ENCODE measurements at regions of chr12 and their contacts with region 1.

Region 1: DNA sequence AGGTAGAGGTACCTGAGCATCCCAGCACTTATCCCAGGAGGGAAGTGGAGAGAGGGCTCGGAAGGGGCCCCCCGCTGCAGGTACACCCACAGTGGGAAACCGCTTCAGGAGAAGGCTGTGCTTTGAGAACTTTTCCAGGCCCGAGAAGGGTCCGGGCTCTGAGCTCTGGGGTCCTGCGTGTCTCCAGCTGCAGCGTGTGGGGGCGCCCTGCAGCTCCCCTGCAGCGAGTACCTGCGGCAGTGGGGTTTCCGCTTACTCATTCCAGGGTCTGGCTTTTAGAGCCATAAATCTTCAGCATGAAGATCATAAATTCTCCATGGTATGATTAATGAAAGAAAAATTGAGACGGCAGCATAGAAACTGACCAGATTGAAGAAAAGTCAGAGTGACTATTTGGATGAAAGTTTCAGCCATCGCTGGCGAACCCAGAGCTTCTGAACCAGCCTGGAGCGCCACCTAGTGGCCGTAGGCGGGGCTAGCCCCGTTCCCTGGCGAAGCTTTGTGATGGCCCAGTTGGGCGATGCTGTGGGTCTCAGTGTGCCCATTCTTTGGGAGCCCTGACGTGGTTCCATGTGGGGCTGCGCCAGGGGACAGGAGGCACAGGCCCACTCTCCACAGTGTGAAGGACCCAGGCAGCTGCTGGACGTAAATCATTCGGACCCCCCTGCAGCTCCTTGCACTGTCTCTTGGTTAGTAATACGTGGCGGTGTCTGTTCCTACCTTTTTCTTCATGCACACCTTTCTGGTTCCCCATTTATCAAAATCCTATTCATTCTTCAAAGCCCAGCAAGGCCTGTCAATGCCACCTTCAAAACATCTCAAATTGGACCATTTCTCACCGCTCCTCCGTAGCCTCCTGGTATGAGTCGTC is 198.2 kb downstream of the TSPAN9 start:
- DNase-seq: peak; percentile 68
- H3K4me3 ChIP-seq: no peak overlapping the region
- CTCF ChIP-seq: peak; percentile 97

Region 2: GRCh38 chr12:3073438-3074250 is 201.8 kb before region 1 on chr12:
- in situ Hi-C with region 1: loop called (anchors 10 kb)
- DNase-seq: peak; percentile 88
- H3K4me3 ChIP-seq: no peak overlapping the region
- CTCF ChIP-seq: peak; percentile 99

Region 3: GRCh38 chr12:3097186-3097804 is 178.1 kb before region 1 on chr12:
- in situ Hi-C with region 1: no loop called
- DNase-seq: no peak
- H3K4me3 ChIP-seq: no peak overlapping the region
- CTCF ChIP-seq: no peak